GM12878 (cell line): ENCODE measurements at regions of chr1 and their contacts with region 1.

Region 1: GRCh38 chr1:233635765-233636502 is 22.0 kb downstream of the KCNK1 start:
- DNase-seq: no peak
- ATAC-seq: no peak
- H3K4me3 ChIP-seq: no peak overlapping the region
- H3K27ac ChIP-seq: no peak overlapping the region
- H3K4me1 ChIP-seq: peaks cover 18% of the 10 kb centered on the region
- H3K27me3 ChIP-seq: no peaks in the 10 kb centered on the region
- CTCF ChIP-seq: no peak
- EP300 ChIP-seq: no peak
- POLR2A ChIP-seq: no peak
- RAD21 ChIP-seq: no peak

Region 2: DNA sequence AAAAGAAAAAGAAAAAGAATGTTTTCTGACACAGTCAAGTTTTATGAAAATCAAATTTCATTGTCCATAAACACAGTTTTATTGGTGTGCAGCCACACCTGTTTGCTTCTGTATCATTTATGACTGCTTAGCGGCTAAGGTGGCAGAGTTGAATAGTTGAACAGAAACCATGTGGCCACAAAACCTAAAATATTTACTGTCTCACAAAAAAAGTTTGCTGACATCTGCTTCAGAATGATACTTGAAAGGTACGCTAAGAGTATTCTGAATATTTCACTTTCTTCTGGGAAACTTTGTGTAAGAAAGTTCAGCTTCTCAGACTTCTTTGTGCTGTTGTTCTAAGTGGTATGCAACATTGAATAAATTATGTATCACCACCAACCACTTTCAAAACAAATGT is 15.9 kb before region 1 on chr1:
- CTCF ChIA-PET with region 1: interaction called, 10 read pairs
- POLR2A ChIA-PET with region 1: interaction called, 5 read pairs
- RAD21 ChIA-PET with region 1: interaction called, 15 read pairs
- SMC1A ChIA-PET with region 1: interaction called, 36 read pairs
- in situ Hi-C with region 1: no loop called
- intact Hi-C with region 1: no loop called
- DNase-seq: peak; percentile 49
- ATAC-seq: peak; percentile 59
- H3K4me3 ChIP-seq: no peak overlapping the region
- H3K27ac ChIP-seq: no peak overlapping the region
- H3K4me1 ChIP-seq: peaks cover 23% of the 10 kb centered on the region
- H3K27me3 ChIP-seq: no peaks in the 10 kb centered on the region
- CTCF ChIP-seq: no peak
- EP300 ChIP-seq: peak; percentile 58 to 86; a peak in 3 of 4 replicates
- POLR2A ChIP-seq: no peak
- RAD21 ChIP-seq: no peak

Region 3: GRCh38 chr1:233662575-233663304 is 26.8 kb after region 1 on chr1:
- CTCF ChIA-PET with region 1: interaction called, 7 read pairs
- POLR2A ChIA-PET with region 1: interaction called, 3 read pairs
- RAD21 ChIA-PET with region 1: interaction called, 7 read pairs
- SMC1A ChIA-PET with region 1: interaction called, 18 read pairs
- in situ Hi-C with region 1: no loop called
- intact Hi-C with region 1: no loop called
- DNase-seq: no peak
- ATAC-seq: peak; percentile 47
- H3K4me3 ChIP-seq: no peak overlapping the region
- H3K27ac ChIP-seq: no peak overlapping the region
- H3K4me1 ChIP-seq: no peaks in the 10 kb centered on the region
- H3K27me3 ChIP-seq: no peaks in the 10 kb centered on the region
- CTCF ChIP-seq: no peak
- EP300 ChIP-seq: no peak
- POLR2A ChIP-seq: no peak
- RAD21 ChIP-seq: no peak